Endothelial cell of umbilical vein (primary cell): ENCODE measurements at regions of chr5 and their contacts with region 1.

Region 1: GRCh38 chr5:59390074-59390659 is 503.4 kb downstream of the PDE4D start:
- DNase-seq: peak; percentile 40
- H3K4me3 ChIP-seq: no peak overlapping the region
- H3K27ac ChIP-seq: no peak overlapping the region
- H3K4me1 ChIP-seq: no peaks in the 10 kb centered on the region
- H3K27me3 ChIP-seq: no peaks in the 10 kb centered on the region
- CTCF ChIP-seq: peak; percentile 26 to 33
- POLR2A ChIP-seq: no peak

Region 2: DNA sequence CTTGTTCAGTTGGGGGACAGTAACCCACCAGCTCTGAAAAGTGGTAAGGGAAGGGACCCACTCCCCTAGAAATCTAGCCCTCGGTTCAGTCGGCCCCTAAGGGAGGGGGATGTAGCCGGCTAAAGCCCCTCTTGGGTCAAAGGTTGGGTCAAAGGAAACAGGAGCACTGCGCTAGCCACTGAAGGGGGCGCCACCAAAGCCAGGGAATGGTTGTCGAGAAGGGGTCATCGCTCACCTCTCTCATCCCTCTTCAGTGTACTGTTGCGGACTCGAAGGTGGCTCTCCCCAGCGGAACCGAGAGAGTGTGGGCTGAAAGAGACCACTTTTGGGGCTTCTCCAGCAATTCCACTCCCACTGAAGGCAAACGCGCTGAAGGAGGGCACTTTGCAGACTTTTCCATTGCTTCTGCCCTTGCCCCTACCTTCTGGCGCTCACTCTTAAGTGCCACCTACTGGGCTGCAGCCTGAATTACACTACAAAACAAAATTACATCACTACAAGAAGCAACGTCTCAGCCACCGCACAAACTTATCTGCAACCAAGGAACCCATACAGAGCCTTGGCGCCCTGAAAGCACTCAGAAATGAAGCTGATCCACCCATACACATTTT is 106.5 kb after region 1 on chr5:
- CTCF ChIA-PET with region 1: interaction called, 6 read pairs
- POLR2A ChIA-PET with region 1: no interaction called
- dilution Hi-C with region 1: no loop called
- intact Hi-C with region 1: loop called (anchors 2 kb)
- DNase-seq: peak; percentile 11
- H3K4me3 ChIP-seq: no peak overlapping the region
- H3K27ac ChIP-seq: no peak overlapping the region
- H3K4me1 ChIP-seq: no peaks in the 10 kb centered on the region
- H3K27me3 ChIP-seq: peaks cover 0 to 2% of the 10 kb centered on the region in 2 experiments
- CTCF ChIP-seq: peak; percentile 43 to 50
- POLR2A ChIP-seq: no peak

Region 3: DNA sequence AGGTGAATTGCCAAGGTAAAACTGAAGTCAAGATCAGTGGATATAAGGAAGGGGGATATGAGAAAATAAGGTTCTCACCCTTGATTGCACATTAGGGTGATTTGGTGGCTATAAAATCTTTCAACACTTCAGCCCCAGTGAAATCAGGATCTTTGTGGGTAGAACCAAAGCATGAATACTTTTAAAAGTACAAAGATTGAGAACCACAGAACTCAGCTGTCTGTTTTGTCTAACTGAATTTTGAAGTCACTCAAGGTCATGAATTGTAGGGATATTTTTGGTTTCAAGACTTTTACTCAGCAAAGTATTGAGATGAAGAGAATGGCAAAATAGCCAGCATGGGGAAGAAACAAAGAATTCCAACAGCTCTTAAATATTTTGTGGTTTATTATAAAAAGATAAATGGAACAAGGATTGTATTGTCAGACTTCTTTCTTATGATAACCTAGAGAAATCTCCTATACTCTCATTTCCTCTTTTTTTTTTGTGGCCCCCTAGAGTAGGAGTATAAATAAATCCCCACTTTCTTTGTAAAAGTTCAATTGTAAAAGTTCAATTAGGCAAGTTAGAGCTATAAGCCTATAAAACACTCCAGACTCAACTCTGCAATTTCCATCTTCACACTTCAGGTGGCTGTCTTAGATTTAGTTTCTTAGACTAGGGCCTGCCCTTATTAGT is 230.5 kb after region 1 on chr5:
- CTCF ChIA-PET with region 1: no interaction called
- POLR2A ChIA-PET with region 1: no interaction called
- dilution Hi-C with region 1: no loop called
- intact Hi-C with region 1: no loop called
- DNase-seq: no peak
- H3K4me3 ChIP-seq: no peak overlapping the region
- H3K27ac ChIP-seq: no peak overlapping the region
- H3K4me1 ChIP-seq: no peaks in the 10 kb centered on the region
- H3K27me3 ChIP-seq: no peaks in the 10 kb centered on the region
- CTCF ChIP-seq: no peak
- POLR2A ChIP-seq: no peak

Region 4: GRCh38 chr5:59724482-59725391 is 334.6 kb after region 1 on chr5:
- CTCF ChIA-PET with region 1: interaction called, 5 read pairs
- POLR2A ChIA-PET with region 1: no interaction called
- dilution Hi-C with region 1: no loop called
- intact Hi-C with region 1: loop called (anchors 2 kb)
- DNase-seq: peak; percentile 39
- H3K4me3 ChIP-seq: no peak overlapping the region
- H3K27ac ChIP-seq: no peak overlapping the region
- H3K4me1 ChIP-seq: peaks cover 17% of the 10 kb centered on the region
- H3K27me3 ChIP-seq: no peaks in the 10 kb centered on the region
- CTCF ChIP-seq: peak; percentile 36 to 66
- POLR2A ChIP-seq: no peak